ENCODE measurements at regions of chr9 and their contacts with region 1.

Region 1: DNA sequence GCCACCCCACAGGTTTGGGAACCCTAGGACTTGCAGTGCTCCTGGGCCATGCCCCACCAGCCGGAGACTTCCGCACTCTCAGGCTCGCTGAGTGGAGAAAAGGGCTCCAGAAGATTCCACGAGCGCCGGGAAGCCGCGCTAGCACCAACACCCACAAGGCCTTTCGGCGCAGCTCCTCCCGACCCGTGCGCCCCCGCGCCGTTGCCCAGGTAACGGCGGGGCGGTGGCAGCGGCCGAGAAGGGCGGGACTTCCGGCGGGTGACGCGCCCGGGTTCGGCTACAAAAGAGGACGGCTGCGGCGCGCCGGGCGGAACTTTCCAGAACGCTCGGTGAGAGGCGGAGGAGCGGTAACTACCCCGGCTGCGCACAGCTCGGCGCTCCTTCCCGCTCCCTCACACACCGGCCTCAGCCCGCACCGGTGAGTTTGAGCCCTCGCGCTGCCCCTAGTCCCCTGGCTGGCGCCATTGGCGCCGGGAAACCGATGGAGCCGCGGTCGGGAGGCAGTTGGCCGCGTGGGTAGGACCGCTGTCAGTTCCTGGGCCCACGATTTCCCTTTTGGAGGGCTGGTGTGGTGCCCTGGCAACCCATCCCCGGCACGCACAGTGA is at the start of gene DNAJA1:
- DNase-seq: peak; percentile 98
- ATAC-seq: peak; percentile 84
- H3K4me3 Mint-ChIP-seq: peak within 1 kb of the TSS; percentile 95
- H3K27ac Mint-ChIP-seq: peak within 1 kb of the TSS; percentile 88
- H3K4me1 Mint-ChIP-seq: peaks cover 63% of the 10 kb centered on the region
- H3K27me3 Mint-ChIP-seq: no peaks in the 10 kb centered on the region
- CTCF ChIP-seq: no peak
- total RNA-seq, gene DNAJA1: 107 and 117 TPM in 2 replicates

Region 2: GRCh38 chr9:32526041-32526706 is 498.9 kb before region 1 on chr9 and contains the start of gene RIGI:
- CTCF ChIA-PET with region 1: no interaction called
- POLR2A ChIA-PET with region 1: interaction called, 12 read pairs
- intact Hi-C with region 1: no loop called
- DNase-seq: peak; percentile 59
- ATAC-seq: peak; percentile 69
- H3K4me3 Mint-ChIP-seq: peak within 1 kb of the TSS; percentile 98
- H3K27ac Mint-ChIP-seq: peak within 1 kb of the TSS; percentile 94
- H3K4me1 Mint-ChIP-seq: peaks cover 55% of the 10 kb centered on the region
- H3K27me3 Mint-ChIP-seq: no peaks in the 10 kb centered on the region
- CTCF ChIP-seq: no peak
- total RNA-seq, gene RIGI: 11.3 and 12.3 TPM in 2 replicates

Region 3: GRCh38 chr9:33007755-33008154 is 17.3 kb before region 1 on chr9:
- CTCF ChIA-PET with region 1: no interaction called
- POLR2A ChIA-PET with region 1: interaction called, 37 read pairs
- intact Hi-C with region 1: no loop called
- DNase-seq: no peak
- ATAC-seq: no peak
- H3K4me3 Mint-ChIP-seq: no peak overlapping the region
- H3K27ac Mint-ChIP-seq: no peak overlapping the region
- H3K4me1 Mint-ChIP-seq: no peaks in the 10 kb centered on the region
- H3K27me3 Mint-ChIP-seq: no peaks in the 10 kb centered on the region
- CTCF ChIP-seq: no peak

Region 4: DNA sequence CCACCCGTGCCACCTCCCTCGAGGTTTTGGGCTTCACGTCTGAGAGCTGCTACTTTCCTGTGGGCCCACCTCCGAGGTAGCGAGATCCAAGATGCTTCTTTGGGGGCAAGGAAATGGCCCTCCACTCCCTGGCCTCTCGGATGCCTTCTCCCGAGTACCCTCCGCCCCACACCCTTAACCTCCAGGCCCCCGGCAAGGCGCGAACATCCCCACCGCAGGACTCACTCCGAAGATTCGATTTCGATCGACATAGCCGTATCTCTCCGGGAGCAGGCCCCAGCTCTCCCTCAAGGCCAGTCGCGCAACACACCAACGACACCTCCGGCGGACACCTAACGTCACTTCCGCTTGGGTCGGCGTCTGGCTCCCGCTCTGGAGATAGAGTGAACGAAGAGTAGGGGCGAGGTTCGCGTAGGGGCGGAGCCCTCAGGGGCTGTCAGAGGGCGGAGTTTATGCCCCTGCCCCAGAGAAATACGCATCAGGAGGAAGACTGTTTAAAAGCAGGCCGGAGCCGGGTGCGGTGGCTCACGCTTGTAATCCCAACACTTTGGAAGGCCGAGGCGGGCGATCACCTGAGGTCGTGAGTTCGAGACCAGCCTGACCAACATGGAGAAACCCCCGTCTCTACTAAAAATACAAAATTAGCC is 51.4 kb after region 1 on chr9 and contains the start of gene SMU1:
- CTCF ChIA-PET with region 1: no interaction called
- POLR2A ChIA-PET with region 1: interaction called, 34 read pairs
- intact Hi-C with region 1: loop called (anchors 1 kb)
- DNase-seq: peak; percentile 86
- ATAC-seq: peak; percentile 98
- H3K4me3 Mint-ChIP-seq: peak within 1 kb of the TSS; percentile 98
- H3K27ac Mint-ChIP-seq: peak within 1 kb of the TSS; percentile 99
- H3K4me1 Mint-ChIP-seq: peaks cover 26% of the 10 kb centered on the region
- H3K27me3 Mint-ChIP-seq: no peaks in the 10 kb centered on the region
- CTCF ChIP-seq: no peak
- total RNA-seq, gene SMU1: 26.8 and 28.1 TPM in 2 replicates

Region 5: DNA sequence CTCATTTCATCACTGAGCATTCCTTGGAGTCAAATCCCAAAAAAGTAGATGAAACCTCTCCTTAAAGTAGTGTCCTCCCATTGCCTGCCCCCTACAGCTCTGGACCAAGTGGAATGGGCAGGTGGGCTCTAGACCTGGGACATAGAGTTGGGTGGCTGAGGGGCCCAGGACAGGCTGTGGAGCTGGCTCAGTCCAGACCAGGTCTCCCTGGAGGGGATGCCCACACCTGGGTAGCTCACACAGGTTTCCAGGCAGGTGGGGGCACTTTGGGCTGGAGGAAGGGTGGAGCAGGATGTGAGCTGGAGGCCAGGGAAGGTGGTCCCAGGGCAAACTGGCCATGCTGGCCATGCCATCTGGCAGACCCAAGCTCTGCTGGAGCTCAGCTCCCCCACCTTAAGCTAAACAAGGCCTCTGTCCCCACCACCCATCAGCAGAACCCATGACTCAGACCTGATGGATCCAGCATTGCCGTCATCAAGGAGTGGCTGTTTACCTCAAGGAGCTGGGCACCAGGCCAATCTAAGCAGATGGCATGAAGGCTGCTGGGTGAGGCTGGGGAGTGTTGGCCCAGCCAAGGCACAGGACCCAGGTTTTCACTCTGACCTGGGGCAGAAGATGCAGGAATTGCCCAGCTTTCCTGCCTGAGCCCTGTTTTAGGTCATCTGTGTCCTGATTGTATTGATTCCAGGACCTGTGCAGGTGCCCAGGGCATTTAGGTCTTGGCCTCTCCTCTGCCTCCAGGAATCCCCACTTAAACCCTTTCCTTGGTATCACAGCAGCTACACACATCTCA is 208.8 kb after region 1 on chr9:
- CTCF ChIA-PET with region 1: no interaction called
- POLR2A ChIA-PET with region 1: no interaction called
- intact Hi-C with region 1: no loop called
- DNase-seq: no peak
- ATAC-seq: no peak
- H3K4me3 Mint-ChIP-seq: no peak overlapping the region
- H3K27ac Mint-ChIP-seq: no peak overlapping the region
- H3K4me1 Mint-ChIP-seq: no peaks in the 10 kb centered on the region
- H3K27me3 Mint-ChIP-seq: peaks cover 12% of the 10 kb centered on the region
- CTCF ChIP-seq: no peak

Region 6: DNA sequence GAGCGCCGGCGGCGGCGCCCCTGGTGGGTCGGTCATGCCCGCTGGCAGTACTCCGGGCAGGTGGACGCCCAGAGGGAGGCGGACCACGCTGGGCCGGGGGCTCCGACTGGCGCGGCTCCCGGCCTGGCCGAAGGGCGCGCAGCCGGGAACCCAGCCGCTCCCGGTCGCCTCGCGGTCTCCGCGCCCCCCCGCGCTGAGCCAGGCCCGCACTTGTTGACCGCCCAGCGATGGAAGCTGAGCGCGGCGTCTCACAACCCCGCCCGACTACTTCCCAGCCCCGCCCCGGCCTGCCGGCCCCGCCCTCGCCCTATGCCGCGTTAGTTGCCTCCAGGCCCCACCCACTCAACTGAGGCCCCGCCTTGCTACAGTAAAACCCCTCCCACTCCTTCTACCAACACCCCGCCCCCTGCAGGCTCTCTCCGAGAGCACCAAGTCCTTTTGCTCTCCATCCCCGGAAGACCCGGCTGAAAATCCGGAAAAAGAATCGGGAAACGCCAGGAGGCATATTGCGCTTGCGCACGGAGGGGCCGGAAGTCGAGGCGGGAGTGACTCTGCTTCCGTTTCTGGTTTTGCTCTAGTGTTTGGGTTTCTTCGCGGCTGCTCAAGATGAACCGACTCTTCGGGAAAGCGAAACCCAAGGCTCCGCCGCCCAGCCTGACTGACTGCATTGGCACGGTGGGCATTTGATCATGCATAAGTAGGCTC is 239.6 kb after region 1 on chr9 and contains the starts of genes BAG1 and CHMP5:
- CTCF ChIA-PET with region 1: no interaction called
- POLR2A ChIA-PET with region 1: interaction called, 6 read pairs
- intact Hi-C with region 1: loop called (anchors 1 kb)
- DNase-seq: peak; percentile 99
- ATAC-seq: peak; percentile 98
- H3K4me3 Mint-ChIP-seq: peak within 1 kb of the TSS; percentile 93
- H3K27ac Mint-ChIP-seq: peak within 1 kb of the TSS; percentile 97
- H3K4me1 Mint-ChIP-seq: peaks cover 39% of the 10 kb centered on the region
- H3K27me3 Mint-ChIP-seq: no peaks in the 10 kb centered on the region
- CTCF ChIP-seq: no peak
- total RNA-seq, gene BAG1: 58.3 and 58.9 TPM in 2 replicates
- total RNA-seq, gene CHMP5: 27.4 and 28.1 TPM in 2 replicates

Region 7: DNA sequence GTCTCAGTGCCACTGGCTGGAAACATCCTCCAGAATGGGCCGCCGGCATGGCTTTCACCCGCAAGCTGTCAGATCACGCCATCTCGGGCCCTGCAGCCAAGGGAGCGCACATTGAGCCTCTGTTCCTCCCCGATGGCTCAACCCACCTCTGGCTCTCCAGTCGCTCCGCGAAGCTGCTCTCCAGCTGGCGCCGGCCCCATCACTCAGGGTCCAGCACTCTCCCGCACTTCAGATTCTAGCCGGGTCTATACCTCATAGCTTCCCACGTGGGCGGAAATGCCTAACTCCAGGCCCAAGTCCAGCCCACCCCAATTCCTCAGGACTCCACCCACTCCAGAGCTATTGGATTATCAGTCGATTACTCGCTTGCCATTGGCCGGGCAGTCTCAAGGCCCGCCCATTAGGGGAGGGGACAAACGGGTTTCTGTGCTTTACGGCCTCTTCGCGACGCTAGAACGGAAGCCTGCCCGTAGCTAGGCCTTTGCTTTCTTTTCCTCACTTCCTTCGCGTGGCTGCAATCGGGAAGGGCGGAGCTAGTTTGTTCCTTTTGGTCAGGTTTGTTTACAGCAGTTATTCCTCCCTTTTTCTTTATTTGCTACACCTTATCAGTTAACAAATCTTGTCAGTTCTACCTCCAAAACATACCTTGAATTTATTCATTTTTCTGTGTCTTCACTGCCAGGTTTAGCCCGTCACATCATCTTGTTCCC is 448.7 kb after region 1 on chr9 and contains the start of gene NOL6:
- CTCF ChIA-PET with region 1: no interaction called
- POLR2A ChIA-PET with region 1: interaction called, 12 read pairs
- intact Hi-C with region 1: loop called (anchors 10 kb)
- DNase-seq: peak; percentile 93
- ATAC-seq: peak; percentile 99
- H3K4me3 Mint-ChIP-seq: peak within 1 kb of the TSS; percentile 99
- H3K27ac Mint-ChIP-seq: peak within 1 kb of the TSS; percentile 94
- H3K4me1 Mint-ChIP-seq: peaks cover 28% of the 10 kb centered on the region
- H3K27me3 Mint-ChIP-seq: no peaks in the 10 kb centered on the region
- CTCF ChIP-seq: no peak
- total RNA-seq, gene NOL6: 59.9 and 60.1 TPM in 2 replicates

Region 8: DNA sequence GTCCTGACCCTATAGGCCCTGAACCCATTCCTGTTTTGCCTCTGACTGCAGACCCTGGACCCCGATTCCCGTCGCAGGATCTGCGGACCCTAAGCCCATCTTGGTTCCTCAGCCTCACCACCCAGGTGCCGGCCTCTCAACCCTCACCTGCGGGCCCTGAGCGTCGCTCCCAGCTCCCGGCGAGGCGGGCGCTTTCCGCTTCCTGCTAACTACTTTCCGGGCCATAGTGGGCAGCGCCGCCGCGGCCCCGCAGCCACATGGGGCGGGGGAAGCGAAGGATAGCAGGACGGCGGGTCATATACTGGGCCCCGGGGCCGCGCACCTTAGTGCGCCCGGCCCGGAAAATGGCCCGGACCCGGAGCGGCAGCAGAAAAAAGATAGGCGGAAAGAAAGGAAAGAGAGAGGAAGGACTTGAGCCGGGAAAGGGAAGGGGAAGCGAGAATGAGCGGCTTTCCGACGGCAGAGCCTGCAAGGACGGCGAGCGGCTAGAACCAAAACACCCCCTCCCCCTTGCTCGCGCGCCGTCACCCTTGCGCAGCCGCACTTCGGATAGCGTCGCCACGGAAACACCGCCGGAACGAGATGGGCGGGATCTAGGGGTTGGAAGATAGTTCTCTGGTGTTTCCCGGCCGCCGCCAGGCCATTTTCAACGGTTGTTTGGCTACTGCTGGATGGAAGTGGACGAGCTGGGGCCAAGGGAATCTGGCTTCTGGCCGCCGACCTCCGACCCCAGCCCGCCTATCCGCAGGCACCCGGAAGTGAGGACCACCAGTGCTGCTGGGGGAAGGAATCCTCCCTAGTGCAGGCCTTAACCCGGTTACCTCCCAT is 1101.4 kb after region 1 on chr9 and contains the start of gene DCAF12:
- CTCF ChIA-PET with region 1: no interaction called
- POLR2A ChIA-PET with region 1: no interaction called
- intact Hi-C with region 1: no loop called
- DNase-seq: peak; percentile 71
- ATAC-seq: peak; percentile 81
- H3K4me3 Mint-ChIP-seq: peak within 1 kb of the TSS; percentile 90
- H3K27ac Mint-ChIP-seq: peak within 1 kb of the TSS; percentile 72
- H3K4me1 Mint-ChIP-seq: peaks cover 52% of the 10 kb centered on the region
- H3K27me3 Mint-ChIP-seq: peaks cover 39% of the 10 kb centered on the region
- CTCF ChIP-seq: no peak
- total RNA-seq, gene DCAF12: 3.8 and 5.9 TPM in 2 replicates

Measured in activated B cell treated with CpG ODN at 0.5 μM for 24 hours (primary cell).